Activated T-helper 2 cell treated with anti-CD3 and anti-CD28 coated beads, Interferon-gamma antibody, Interleukin-2, Interleukin-4, amounts not matched to agents 10 μg/mL and 5 μg/mL and 100 μg/mL, durations not matched to agents 14 hours and 24 hours and 36 hours (primary cell): ENCODE measurements at regions of chr4 and their contacts with region 1.

Region 1: GRCh38 chr4:140252742-140253555 is 99.0 kb upstream of the MAML3 start:
- DNase-seq: peak; percentile 39
- H3K4me3 Mint-ChIP-seq: peak overlapping the region; percentile 68
- H3K27ac Mint-ChIP-seq: peak overlapping the region; percentile 56
- H3K4me1 Mint-ChIP-seq: peaks cover 36% of the 10 kb centered on the region
- H3K27me3 Mint-ChIP-seq: peaks cover 17% of the 10 kb centered on the region

Region 2: GRCh38 chr4:139734875-139735380 is 518.0 kb before region 1 on chr4:
- intact Hi-C with region 1: loop called (anchors 2 kb)
- DNase-seq: peak; percentile 35
- H3K4me3 Mint-ChIP-seq: peak overlapping the region; percentile 49
- H3K27ac Mint-ChIP-seq: no peak overlapping the region
- H3K4me1 Mint-ChIP-seq: peaks cover 11% of the 10 kb centered on the region
- H3K27me3 Mint-ChIP-seq: peaks cover 54% of the 10 kb centered on the region

Region 3: GRCh38 chr4:140012688-140013486 is 240.1 kb before region 1 on chr4:
- intact Hi-C with region 1: loop called (anchors 1 kb)
- DNase-seq: peak; percentile 29
- H3K4me3 Mint-ChIP-seq: no peak overlapping the region
- H3K27ac Mint-ChIP-seq: no peak overlapping the region
- H3K4me1 Mint-ChIP-seq: peaks cover 9% of the 10 kb centered on the region
- H3K27me3 Mint-ChIP-seq: peaks cover 42% of the 10 kb centered on the region

Region 4: GRCh38 chr4:140049024-140049848 is 203.7 kb before region 1 on chr4:
- intact Hi-C with region 1: loop called (anchors 1 kb)
- DNase-seq: peak; percentile 52
- H3K4me3 Mint-ChIP-seq: peak overlapping the region; percentile 74
- H3K27ac Mint-ChIP-seq: peak overlapping the region; percentile 78
- H3K4me1 Mint-ChIP-seq: peaks cover 55% of the 10 kb centered on the region
- H3K27me3 Mint-ChIP-seq: peaks cover 36% of the 10 kb centered on the region

Region 5: DNA sequence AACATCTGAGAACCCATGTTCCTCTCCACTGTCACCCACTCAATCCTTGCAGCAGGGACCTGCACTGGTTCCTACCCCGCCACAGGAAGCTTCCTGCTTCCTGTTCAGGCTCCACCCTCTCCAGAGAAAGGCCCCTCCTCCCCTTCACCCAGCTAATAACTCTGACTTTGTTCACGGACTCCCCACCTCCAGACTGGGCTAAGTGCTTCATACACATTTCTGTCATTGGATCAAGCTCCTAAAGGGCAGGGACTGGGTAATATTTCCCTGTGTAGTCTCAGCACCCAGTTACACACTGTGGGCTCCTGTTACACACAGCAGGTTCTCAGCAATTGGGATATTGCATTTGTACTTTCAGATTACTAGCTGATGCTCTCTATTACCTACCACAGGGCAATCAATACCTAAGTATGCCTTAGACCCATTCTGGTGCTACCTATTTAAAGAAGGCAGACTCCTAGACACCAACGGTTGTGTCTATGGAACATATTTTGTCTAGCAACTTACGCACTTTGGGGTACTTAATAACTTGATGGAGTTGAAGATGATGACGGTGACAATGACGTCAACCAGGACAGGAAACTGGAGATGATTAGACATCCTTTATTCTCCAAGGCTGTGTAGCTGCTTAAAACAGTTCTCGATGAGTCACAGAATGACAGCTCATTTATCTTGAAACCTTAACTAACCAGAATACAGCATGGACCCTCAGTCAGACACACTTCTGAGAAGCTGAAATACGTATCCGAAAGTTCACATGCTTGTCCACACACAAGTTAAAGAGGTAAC is 157.1 kb before region 1 on chr4:
- intact Hi-C with region 1: loop called (anchors 5 kb)
- DNase-seq: peak; percentile 61
- H3K4me3 Mint-ChIP-seq: peak overlapping the region; percentile 86
- H3K27ac Mint-ChIP-seq: peak overlapping the region; percentile 99
- H3K4me1 Mint-ChIP-seq: peaks cover 82% of the 10 kb centered on the region
- H3K27me3 Mint-ChIP-seq: no peaks in the 10 kb centered on the region

Region 6: DNA sequence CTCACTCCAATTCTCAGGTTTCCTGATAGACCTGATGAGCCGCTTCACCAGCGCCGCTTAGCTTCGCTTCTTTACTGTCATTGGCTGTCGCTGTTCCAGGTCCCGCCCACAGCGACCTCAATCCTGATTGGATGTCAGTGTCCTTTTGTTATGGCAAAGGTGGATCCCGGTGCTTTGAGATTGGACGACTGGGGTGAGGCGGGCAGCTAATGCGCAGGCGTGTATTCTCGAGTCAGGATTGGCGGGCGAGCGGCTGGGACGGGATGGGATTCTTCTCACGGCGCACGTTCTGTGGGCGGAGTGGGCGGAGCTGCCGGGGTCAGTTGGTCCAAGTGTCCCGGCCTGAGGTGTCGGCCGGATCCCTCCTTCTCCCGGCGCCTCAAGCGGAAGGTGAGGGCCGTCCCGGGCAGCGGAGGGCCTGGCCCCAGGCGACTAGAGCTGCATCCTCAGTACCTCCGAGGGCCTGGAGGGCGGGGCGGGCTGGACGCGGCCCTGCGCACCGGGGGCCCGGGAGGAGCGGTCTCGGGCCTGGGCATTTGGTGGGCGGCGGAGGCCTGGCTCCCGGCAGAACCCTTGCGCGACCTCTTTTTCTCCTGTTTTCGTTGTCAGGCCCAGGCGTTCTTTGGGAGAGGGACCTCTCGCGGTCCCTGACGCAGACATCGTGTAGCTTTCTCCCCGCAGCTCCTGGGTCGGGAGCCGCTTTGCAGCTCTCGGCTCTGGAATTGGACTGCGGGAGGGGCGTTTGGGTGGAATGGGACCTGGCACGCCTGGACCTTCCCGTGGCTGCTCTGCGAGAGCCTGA is 120.6 kb after region 1 on chr4 and contains the start of gene SCOC:
- intact Hi-C with region 1: loop called (anchors 5 kb)
- DNase-seq: peak; percentile 97
- H3K4me3 Mint-ChIP-seq: no peak within 1 kb of the TSS
- H3K27ac Mint-ChIP-seq: no peak within 1 kb of the TSS
- H3K4me1 Mint-ChIP-seq: peaks cover 28% of the 10 kb centered on the region
- H3K27me3 Mint-ChIP-seq: peaks cover 10% of the 10 kb centered on the region
- total RNA-seq, gene SCOC: 36.7 and 38.0 TPM in 2 replicates